ENCODE measurements at regions of chr5 and their contacts with region 1.

Region 1: GRCh38 chr5:38666668-38667498 is 110.4 kb upstream of the LIFR start:
- DNase-seq: peak; percentile 32 to 63 (median 51)
- ATAC-seq: peak; percentile 92 to 96 (median 94)
- H3K4me3 ChIP-seq: no peak overlapping the region
- H3K27ac ChIP-seq: peak overlapping the region in 3 of 12 donors; percentile 5 to 50 (median 50)
- H3K4me1 ChIP-seq: peaks cover 0 to 37% (median 13%) of the 10 kb centered on the region in 12 donors
- H3K27me3 ChIP-seq: no peaks in the 10 kb centered on the region
- CTCF ChIP-seq: peak; percentile 36 to 87 (median 72)
- POLR2A ChIP-seq: no peak

Region 2: GRCh38 chr5:38497946-38498345 is 168.9 kb before region 1 on chr5:
- intact Hi-C with region 1: loop called in 3 of 10 experiments (anchors 5 kb)
- DNase-seq: no peak
- ATAC-seq: peak in 3 of 4 donors; percentile 36 to 66 (median 44)
- H3K4me3 ChIP-seq: no peak overlapping the region
- H3K27ac ChIP-seq: no peak overlapping the region
- H3K4me1 ChIP-seq: peaks cover 0 to 3% (median 0%) of the 10 kb centered on the region in 12 donors
- H3K27me3 ChIP-seq: no peaks in the 10 kb centered on the region
- CTCF ChIP-seq: peak in 8 of 12 donors; percentile 8 to 46 (median 21)
- POLR2A ChIP-seq: no peak

Region 3: GRCh38 chr5:38528162-38528703 is 138.7 kb before region 1 on chr5:
- intact Hi-C with region 1: no loop called
- DNase-seq: no peak
- ATAC-seq: peak in 2 of 4 donors; percentile 22 to 43
- H3K4me3 ChIP-seq: no peak overlapping the region
- H3K27ac ChIP-seq: no peak overlapping the region
- H3K4me1 ChIP-seq: peaks cover 7 to 46% (median 22%) of the 10 kb centered on the region in 12 donors
- H3K27me3 ChIP-seq: no peaks in the 10 kb centered on the region
- CTCF ChIP-seq: no peak
- POLR2A ChIP-seq: no peak

Region 4: DNA sequence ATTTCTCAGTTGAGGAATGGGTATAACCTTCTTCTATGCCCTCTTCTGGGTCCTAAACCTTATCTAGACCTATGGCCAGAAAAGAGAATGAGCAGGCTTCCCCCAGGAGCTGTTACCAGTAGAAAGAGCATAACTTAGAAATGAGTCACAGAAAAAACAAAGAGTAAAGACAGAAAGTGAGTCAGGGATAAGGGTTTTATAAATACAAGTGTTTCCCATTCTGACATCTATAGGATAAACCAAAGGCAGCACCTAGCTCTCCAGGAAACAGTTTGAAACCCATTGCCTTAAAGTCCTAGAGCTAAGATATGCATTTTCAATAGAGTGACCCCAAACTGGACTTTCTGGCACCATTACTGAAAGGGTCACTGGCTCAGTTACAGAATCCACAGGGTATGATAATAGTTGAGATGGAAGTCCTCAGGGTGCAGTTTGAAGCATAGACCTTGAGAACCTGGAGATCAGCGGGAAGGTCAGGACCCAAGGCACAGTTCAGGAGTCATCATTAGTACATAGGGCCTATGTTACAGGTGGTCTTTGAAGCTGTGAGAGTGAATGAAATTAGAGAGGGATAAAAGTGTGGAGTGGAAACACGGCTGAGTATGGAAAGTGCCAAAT is 67.8 kb before region 1 on chr5:
- intact Hi-C with region 1: loop called in 1 of 10 experiments (anchors 10 kb)
- DNase-seq: no peak
- ATAC-seq: no peak
- H3K4me3 ChIP-seq: no peak overlapping the region
- H3K27ac ChIP-seq: peak overlapping the region in 1 of 12 donors; percentile 32
- H3K4me1 ChIP-seq: peaks cover 3 to 59% (median 34%) of the 10 kb centered on the region in 12 donors
- H3K27me3 ChIP-seq: no peaks in the 10 kb centered on the region
- CTCF ChIP-seq: no peak
- POLR2A ChIP-seq: no peak

Measured in heart left ventricle (tissue), 16 donors.